ENCODE measurements at regions of chr1 and their contacts with region 1.

Region 1: GRCh38 chr1:145720877-145721671 is 1.8 kb downstream of the CD160 start:
- DNase-seq: peak; percentile 73
- H3K4me3 Mint-ChIP-seq: peak overlapping the region; percentile 62
- H3K27ac Mint-ChIP-seq: peak overlapping the region; percentile 21
- H3K4me1 Mint-ChIP-seq: peaks cover 11% of the 10 kb centered on the region
- H3K27me3 Mint-ChIP-seq: no peaks in the 10 kb centered on the region
- CTCF ChIP-seq: peak; percentile 99

Region 2: DNA sequence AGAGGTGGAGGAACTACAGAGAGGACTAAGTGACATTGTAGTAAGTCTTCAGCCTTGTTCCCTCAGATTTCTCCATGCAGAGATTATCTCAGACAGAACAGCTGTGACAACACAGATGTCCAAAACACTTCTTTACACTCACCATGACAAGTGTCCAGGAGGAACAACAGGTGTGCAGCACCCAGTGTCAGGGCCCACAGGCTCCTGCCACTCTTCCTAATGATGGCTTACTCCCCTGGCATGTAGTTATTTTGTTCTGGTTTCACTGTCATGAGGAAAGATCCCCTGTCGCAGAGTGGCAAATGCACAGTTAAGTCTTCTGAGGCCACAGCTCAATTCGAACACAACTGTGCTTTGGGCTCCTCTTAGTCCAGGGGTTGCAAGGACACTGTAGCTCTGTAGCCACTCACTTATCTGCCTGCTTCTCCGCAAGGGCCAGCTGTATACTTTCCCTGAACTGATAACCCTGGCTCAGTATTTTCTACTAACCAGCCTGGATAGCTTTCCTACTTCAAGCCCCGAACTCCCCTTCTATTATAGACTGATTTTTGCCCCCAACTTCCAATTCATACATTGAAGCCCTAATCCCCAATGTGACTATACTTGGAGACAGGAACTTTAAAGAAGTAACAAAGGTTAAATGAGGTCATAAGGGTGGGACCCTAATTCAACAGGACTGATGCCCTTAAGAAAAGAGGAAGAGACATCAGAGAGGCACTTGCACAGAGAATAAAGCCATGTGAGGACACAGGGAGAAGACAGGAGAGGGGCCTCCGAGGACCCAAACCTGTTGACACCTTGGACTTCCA is 25.0 kb before region 1 on chr1:
- CTCF ChIA-PET with region 1: interaction called, 15 read pairs
- POLR2A ChIA-PET with region 1: no interaction called
- intact Hi-C with region 1: no loop called
- DNase-seq: no peak
- H3K4me3 Mint-ChIP-seq: no peak overlapping the region
- H3K27ac Mint-ChIP-seq: no peak overlapping the region
- H3K4me1 Mint-ChIP-seq: peaks cover 4% of the 10 kb centered on the region
- H3K27me3 Mint-ChIP-seq: no peaks in the 10 kb centered on the region
- CTCF ChIP-seq: no peak

Region 3: DNA sequence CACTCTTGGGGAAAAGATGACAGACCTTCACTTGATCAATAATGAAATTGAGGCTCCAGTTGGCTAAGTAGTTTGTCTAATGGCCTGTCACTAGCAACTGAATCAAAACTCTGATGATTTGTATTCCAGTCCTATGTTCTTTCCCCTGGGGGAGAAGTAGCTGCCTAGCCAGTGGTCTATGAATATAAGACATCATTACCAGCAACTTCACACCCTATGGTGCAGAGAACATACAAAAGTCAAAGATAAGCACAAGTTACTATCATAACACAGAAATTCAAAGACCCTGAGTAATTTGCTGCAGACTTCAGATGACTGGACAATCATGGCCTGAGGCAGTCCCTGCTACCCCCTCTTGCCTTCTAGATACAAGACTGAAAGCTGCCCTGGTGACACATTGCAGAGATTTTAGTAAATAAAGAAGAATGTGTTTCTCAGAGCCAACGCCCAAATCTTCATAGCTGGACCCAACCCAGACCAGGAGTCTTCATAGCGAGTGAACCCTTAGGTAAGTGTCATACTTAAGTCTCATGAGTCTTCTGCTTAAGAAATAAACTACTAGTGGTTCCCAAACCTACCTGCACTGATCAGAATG is 14.9 kb before region 1 on chr1:
- CTCF ChIA-PET with region 1: interaction called, 63 read pairs
- POLR2A ChIA-PET with region 1: interaction called, 5 read pairs
- intact Hi-C with region 1: no loop called
- DNase-seq: peak; percentile 68
- H3K4me3 Mint-ChIP-seq: no peak overlapping the region
- H3K27ac Mint-ChIP-seq: peak overlapping the region; percentile 65
- H3K4me1 Mint-ChIP-seq: peaks cover 26% of the 10 kb centered on the region
- H3K27me3 Mint-ChIP-seq: no peaks in the 10 kb centered on the region
- CTCF ChIP-seq: no peak

Region 4: GRCh38 chr1:145740266-145740665 is 19.2 kb after region 1 on chr1:
- CTCF ChIA-PET with region 1: interaction called, 30 read pairs
- POLR2A ChIA-PET with region 1: no interaction called
- intact Hi-C with region 1: no loop called
- DNase-seq: no peak
- H3K4me3 Mint-ChIP-seq: no peak overlapping the region
- H3K27ac Mint-ChIP-seq: no peak overlapping the region
- H3K4me1 Mint-ChIP-seq: no peaks in the 10 kb centered on the region
- H3K27me3 Mint-ChIP-seq: no peaks in the 10 kb centered on the region
- CTCF ChIP-seq: no peak

Region 5: DNA sequence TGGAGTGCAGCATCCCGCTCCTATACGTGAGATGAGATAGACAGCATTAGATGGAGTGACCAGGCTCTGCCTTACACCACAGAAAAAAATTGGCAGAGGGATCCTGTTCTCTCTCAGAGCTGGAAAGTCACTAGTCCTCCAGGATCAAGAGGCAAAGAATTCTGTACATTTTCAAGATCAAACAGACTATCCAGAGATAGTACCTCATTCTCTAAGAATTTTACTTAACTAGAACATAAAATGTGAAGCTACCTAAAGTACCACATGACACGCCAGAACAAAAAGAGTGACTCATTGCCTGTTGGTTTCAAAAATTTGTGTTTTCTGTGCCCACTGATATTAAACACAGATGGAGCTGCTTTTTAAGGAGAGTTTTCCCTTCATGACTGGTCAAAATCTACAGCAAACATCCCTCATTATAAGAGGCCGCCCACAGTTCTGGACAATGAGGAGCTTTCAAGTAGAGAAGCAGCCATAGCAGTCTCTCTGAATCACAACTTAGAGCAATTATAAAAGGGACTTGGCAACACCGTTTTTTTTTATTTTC is 30.5 kb after region 1 on chr1:
- CTCF ChIA-PET with region 1: interaction called, 11 read pairs
- POLR2A ChIA-PET with region 1: no interaction called
- intact Hi-C with region 1: no loop called
- DNase-seq: peak; percentile 50
- H3K4me3 Mint-ChIP-seq: no peak overlapping the region
- H3K27ac Mint-ChIP-seq: peak overlapping the region; percentile 87
- H3K4me1 Mint-ChIP-seq: peaks cover 14% of the 10 kb centered on the region
- H3K27me3 Mint-ChIP-seq: no peaks in the 10 kb centered on the region
- CTCF ChIP-seq: no peak

Region 6: DNA sequence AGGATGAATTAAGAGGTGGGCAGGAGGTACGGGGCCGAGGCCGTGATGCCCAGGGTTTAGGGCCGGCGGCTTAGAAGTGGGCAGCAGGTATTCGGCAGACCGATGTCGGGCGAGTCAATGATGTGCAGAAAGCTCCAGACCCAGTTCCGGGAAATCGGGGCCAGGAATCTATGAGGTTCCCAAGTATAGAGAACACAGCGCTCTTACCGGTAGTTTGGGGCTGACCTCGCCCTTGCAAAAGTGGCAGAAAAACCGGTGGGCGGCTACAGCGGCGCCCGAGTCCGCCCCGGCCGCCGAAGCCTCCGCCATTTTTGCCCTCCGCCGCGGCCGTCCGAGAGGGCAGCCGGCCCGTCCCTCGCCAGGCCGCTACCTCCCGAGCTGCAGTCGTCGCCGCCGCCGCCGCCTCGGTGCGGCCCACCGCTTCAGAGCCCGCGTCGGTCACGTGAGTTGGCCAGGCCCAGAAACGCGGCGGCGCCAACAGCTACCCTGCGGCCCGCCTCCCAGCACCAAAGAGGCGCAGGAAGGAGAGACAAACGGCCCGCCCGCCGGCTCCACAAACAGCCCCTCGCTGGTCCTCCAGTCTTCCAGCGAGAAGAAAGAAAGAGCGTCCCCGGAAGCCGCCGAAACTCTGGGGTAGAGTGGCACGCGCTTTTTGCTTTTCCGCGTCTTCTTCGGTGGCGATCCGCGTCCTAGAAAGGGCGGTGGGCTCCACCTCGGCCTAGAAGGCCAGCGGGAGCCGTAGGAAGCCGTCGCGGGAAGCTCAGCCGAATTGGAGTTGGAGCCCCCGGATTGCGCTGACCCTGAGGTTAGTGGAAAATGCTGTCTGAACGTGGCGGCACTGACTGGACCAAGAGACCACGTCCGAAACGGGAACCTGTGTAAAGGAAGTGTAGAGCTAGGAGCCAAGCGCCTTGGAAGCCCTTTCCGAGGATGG is 102.8 kb after region 1 on chr1 and contains the starts of genes POLR3C and RNF115:
- CTCF ChIA-PET with region 1: interaction called, 6 read pairs
- POLR2A ChIA-PET with region 1: interaction called, 4 read pairs
- intact Hi-C with region 1: loop called (anchors 5 kb)
- DNase-seq: peak; percentile 95
- H3K4me3 Mint-ChIP-seq: peak within 1 kb of the TSS; percentile 90
- H3K27ac Mint-ChIP-seq: peak within 1 kb of the TSS; percentile 94
- H3K4me1 Mint-ChIP-seq: peaks cover 6% of the 10 kb centered on the region
- H3K27me3 Mint-ChIP-seq: no peaks in the 10 kb centered on the region
- CTCF ChIP-seq: no peak
- total RNA-seq, gene POLR3C: 67.9 and 96.8 TPM in 2 replicates
- total RNA-seq, gene RNF115: 16.8 and 19.5 TPM in 2 replicates

Region 7: GRCh38 chr1:145879775-145880174 is 158.7 kb after region 1 on chr1:
- CTCF ChIA-PET with region 1: no interaction called
- POLR2A ChIA-PET with region 1: no interaction called
- intact Hi-C with region 1: no loop called
- DNase-seq: no peak
- H3K4me3 Mint-ChIP-seq: no peak overlapping the region
- H3K27ac Mint-ChIP-seq: no peak overlapping the region
- H3K4me1 Mint-ChIP-seq: peaks cover 28% of the 10 kb centered on the region
- H3K27me3 Mint-ChIP-seq: peaks cover 2% of the 10 kb centered on the region
- CTCF ChIP-seq: no peak

Region 8: DNA sequence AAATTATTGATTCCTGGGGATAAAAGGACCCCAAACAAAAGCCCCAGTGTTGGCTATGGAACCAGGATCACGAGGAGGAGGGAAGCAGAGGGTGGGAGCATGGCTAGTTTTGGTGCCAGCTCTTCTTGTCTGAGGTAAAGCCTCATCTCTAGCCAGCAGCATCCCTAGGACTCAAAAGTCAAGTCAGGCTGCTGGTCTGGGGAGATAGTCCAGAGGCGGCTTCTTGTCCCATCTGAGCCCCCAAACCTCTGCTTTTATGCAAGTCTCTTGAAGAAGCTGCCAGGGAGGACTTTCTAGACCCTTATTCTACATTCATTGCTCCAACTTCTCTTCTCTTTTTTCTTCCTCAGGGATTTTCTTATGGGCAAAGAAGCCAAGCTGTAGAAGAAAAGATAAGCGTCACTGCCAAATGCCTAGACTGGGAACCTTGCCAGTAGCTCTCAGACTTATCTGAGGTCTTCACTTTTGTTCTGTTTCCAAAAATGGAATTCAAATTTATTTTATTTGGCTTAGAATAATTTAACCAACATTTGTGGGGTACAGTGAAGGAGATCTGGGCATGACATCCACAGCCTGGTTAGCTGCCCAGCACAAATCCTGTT is 171.5 kb after region 1 on chr1:
- CTCF ChIA-PET with region 1: no interaction called
- POLR2A ChIA-PET with region 1: no interaction called
- intact Hi-C with region 1: no loop called
- DNase-seq: peak; percentile 72
- H3K4me3 Mint-ChIP-seq: peak overlapping the region; percentile 57
- H3K27ac Mint-ChIP-seq: peak overlapping the region; percentile 95
- H3K4me1 Mint-ChIP-seq: peaks cover 36% of the 10 kb centered on the region
- H3K27me3 Mint-ChIP-seq: no peaks in the 10 kb centered on the region
- CTCF ChIP-seq: no peak

Region 9: GRCh38 chr1:145918144-145918992 is 197.3 kb after region 1 on chr1 and contains the start of gene PEX11B:
- CTCF ChIA-PET with region 1: no interaction called
- POLR2A ChIA-PET with region 1: no interaction called
- intact Hi-C with region 1: no loop called
- DNase-seq: peak; percentile 92
- H3K4me3 Mint-ChIP-seq: peak within 1 kb of the TSS; percentile 94
- H3K27ac Mint-ChIP-seq: peak within 1 kb of the TSS; percentile 99
- H3K4me1 Mint-ChIP-seq: peaks cover 43% of the 10 kb centered on the region
- H3K27me3 Mint-ChIP-seq: no peaks in the 10 kb centered on the region
- CTCF ChIP-seq: no peak
- total RNA-seq, gene PEX11B: 35.5 and 36.2 TPM in 2 replicates